ENCODE measurements at regions of chr1 and their contacts with region 1.

Region 1: DNA sequence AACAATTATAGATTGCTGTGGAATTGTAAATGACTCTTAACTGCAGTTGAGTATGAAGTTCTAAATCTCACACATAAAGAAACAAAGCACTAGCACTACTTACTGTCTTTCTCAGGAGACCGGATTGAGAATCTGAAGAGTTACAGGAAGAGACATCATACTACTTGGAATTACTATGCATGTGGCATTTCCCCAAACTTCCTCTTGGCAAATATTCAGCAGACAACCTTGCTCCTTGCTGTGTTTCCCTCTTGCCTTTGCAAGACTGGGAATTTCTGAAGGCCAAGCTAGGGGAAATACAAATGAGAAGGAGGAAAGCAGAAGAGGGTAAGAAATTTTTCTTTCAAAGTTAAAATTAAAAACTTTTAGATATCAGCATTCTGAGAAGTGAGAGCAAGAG is 173.6 kb upstream of the KCTD3 start:
- DNase-seq: no peak
- H3K4me3 ChIP-seq: no peak overlapping the region
- H3K27ac ChIP-seq: no peak overlapping the region
- H3K4me1 ChIP-seq: no peaks in the 10 kb centered on the region
- H3K27me3 ChIP-seq: no peaks in the 10 kb centered on the region
- CTCF ChIP-seq: no peak

Region 2: DNA sequence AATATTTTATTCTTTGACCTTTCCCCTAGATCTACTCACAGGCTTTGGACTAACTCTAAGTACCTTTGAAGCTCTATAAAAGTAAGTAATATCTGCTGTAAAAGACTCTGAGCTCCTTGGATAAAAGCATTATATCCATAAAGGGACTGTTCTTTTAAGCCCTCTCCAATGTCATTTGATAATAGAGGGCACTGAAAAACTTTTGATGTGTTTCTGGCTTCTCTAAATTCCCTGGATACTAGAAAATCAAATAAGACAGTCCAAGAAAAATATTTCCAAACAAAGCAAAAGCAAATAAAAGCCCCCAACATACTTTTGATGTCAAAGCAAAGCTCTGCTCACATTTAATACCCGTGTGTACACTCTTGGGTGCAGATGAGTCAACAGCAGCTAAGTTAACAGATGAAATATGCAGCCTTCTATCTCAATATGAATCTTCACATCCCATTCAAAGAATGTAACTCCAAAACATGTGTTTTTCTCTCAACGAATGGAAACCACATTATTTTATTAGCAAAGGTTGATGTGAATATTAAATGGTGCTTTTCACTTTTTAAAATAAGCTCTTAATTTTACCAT is 560.2 kb before region 1 on chr1:
- CTCF ChIA-PET with region 1: no interaction called
- POLR2A ChIA-PET with region 1: no interaction called
- intact Hi-C with region 1: no loop called
- DNase-seq: no peak
- H3K4me3 ChIP-seq: no peak overlapping the region
- H3K27ac ChIP-seq: no peak overlapping the region
- H3K4me1 ChIP-seq: no peaks in the 10 kb centered on the region
- H3K27me3 ChIP-seq: peaks cover 35% of the 10 kb centered on the region
- CTCF ChIP-seq: no peak

Region 3: DNA sequence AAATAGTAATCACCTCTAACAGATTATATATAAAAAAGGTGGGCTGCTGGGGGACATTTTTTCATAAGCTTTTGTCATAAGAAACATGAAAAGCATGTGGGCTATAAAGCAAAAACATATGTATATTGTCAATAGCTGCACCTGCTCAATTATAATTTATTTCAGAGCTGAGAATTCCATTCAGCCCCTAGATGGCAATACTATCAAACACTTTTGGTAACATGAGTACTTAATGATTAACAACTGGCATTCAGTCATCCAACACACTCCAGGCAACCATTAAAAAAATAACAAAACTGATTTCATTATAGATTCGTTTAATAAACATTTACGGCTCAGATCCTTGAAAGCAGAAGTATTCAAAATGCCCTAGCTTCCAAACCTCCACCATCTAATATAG is 288.8 kb after region 1 on chr1:
- CTCF ChIA-PET with region 1: no interaction called
- POLR2A ChIA-PET with region 1: no interaction called
- intact Hi-C with region 1: loop called (anchors 5 kb)
- DNase-seq: no peak
- H3K4me3 ChIP-seq: no peak overlapping the region
- H3K27ac ChIP-seq: no peak overlapping the region
- H3K4me1 ChIP-seq: no peaks in the 10 kb centered on the region
- H3K27me3 ChIP-seq: peaks cover 4% of the 10 kb centered on the region
- CTCF ChIP-seq: no peak; the same call in 1 of the 2 replicates

Measured in A673 (cell line).